ENCODE measurements at regions of chr3 and their contacts with region 1.

Region 1: DNA sequence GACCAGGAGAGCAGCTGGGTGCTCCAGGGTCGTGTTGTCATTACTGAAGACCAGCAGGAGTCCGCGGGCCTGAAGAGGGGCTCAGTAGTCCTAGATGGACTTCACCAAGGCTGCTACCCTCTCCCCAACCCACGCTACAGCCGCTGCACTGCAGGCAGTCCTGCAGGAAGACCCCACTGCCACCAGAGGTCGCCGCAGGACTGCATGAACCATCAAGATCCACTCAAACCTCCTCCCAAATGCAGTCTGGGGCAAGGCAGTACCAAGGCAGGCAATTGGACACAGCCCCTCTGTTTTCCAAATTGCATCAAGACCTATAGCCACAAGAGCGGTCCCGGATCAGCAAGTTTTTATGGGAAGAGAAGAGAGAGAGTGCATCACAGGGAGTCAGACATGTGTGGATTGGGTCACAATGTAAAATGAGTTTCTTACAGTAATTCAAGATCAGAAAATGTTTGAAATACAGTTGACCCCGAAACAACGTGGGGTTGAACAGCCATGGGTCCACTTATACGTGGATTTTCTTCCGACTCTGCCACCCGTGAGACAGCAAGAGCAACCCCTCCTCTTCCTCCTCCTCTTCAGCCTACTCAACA is 46.7 kb downstream of the DZIP1L start:
- DNase-seq: peak; percentile 82
- ATAC-seq: peak; percentile 86
- H3K4me3 Mint-ChIP-seq: no peak overlapping the region
- H3K27ac Mint-ChIP-seq: no peak overlapping the region
- H3K4me1 Mint-ChIP-seq: peaks cover 17% of the 10 kb centered on the region
- H3K27me3 Mint-ChIP-seq: peaks cover 18% of the 10 kb centered on the region

Region 2: GRCh38 chr3:138082085-138082991 is 13.7 kb after region 1 on chr3:
- CTCF ChIA-PET with region 1: interaction called, 14 read pairs
- POLR2A ChIA-PET with region 1: interaction called, 10 read pairs
- DNase-seq: peak; percentile 39
- ATAC-seq: peak; percentile 76
- H3K4me3 Mint-ChIP-seq: peak overlapping the region; percentile 46
- H3K27ac Mint-ChIP-seq: peak overlapping the region; percentile 68
- H3K4me1 Mint-ChIP-seq: peaks cover 38% of the 10 kb centered on the region
- H3K27me3 Mint-ChIP-seq: peaks cover 13% of the 10 kb centered on the region

Region 3: DNA sequence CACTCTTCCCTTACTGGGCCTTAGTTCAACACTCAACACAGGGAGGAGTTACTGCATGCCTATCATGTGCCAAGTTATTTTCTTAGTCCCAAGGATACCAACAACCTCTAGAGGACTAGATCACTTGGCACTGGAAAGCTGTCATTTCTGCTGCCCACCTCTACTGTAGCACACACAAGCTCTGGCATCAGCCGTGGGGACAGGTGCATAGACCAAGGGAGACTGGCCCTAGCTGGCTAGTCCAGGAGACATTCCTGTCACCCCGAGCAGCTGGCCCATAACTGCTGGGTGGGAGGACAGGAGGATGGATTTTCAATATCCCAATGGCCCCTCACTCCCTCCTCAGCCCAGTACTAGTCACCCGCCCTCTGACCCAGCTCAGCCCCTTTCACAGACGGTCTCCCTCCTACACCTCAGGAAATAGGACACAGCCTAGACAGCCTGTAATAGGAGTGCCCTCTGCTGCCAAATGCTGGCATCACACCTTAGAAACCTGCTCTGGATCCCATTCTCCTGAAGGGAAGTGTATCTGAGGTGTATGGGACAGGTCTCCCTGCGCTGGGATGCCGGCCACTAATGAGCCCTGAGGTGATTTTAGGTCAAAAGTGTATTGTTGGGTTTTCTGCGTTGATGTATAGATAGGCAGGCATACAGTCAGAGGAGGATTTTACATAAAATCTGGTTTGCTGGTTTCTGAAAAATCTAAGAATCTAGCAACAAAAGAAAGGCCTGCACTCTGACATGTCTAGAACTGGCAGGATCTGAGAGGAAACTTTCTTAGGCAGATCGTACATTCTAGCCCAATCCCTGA is 50.1 kb after region 1 on chr3:
- CTCF ChIA-PET with region 1: interaction called, 64 read pairs
- POLR2A ChIA-PET with region 1: no interaction called
- DNase-seq: peak; percentile 67
- ATAC-seq: peak; percentile 56
- H3K4me3 Mint-ChIP-seq: no peak overlapping the region
- H3K27ac Mint-ChIP-seq: no peak overlapping the region
- H3K4me1 Mint-ChIP-seq: peaks cover 8% of the 10 kb centered on the region
- H3K27me3 Mint-ChIP-seq: peaks cover 20% of the 10 kb centered on the region

Measured in activated CD8-positive, alpha-beta T cell treated with anti-CD3 and anti-CD28 coated beads, Interleukin-2, amount 10 ng/mL, durations not matched to agents 7 days and 5 days (primary cell).